Activated T-helper 1 cell treated with anti-CD3 and anti-CD28 coated beads, Interleukin-12 subunit alpha, Interleukin-12 subunit beta, Interleukin-2, Interleukin-4 antibody, amounts not matched to agents 30 ng/mL and 10 ng/mL and 1 ng/mL, durations not matched to agents 14 hours and 24 hours and 36 hours (primary cell): ENCODE measurements at regions of chr7 and their contacts with region 1.

Region 1: GRCh38 chr7:140924019-140924820 is 509 bp downstream of the BRAF start:
- DNase-seq: peak; percentile 69
- H3K4me3 Mint-ChIP-seq: no peak overlapping the region
- H3K27ac Mint-ChIP-seq: no peak overlapping the region
- H3K4me1 Mint-ChIP-seq: peaks cover 11% of the 10 kb centered on the region
- H3K27me3 Mint-ChIP-seq: no peaks in the 10 kb centered on the region

Region 2: DNA sequence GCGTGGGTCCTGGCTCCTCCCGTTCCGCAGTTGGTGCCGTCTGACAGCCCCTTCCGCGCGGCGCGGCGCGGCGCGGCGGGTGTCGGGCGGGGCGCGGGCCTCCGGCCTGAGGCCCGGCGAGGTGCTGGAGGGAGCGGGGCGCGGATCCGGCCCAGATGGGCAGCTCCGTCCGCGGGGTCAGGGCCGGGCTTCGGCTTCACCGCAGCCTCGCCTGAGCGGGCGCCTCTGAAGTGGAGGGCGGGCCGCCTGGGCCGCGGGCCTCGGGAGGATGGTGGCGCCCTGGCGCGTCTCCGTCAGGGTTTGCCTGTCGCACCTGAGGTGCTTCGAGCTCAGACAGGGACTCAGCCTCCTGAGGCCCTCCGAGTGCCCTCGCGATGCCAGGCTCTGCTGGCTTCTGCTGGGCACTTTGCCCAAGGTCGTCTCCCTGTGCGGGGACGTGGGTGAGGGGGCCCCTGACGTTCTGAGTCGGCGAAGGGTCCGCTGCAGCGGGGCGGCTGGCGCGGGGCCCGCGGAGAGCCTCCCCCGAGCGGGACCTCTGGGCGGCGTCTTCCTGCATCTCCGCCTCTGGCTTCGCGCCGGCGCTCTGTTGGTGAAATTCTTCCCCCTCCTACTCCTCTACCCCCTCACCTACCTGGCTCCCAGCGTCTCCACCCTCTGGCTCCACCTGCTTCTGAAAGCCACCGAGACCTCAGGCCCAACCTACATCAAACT is 251.0 kb before region 1 on chr7:
- intact Hi-C with region 1: loop called (anchors 1 kb)
- DNase-seq: peak; percentile 56
- H3K4me3 Mint-ChIP-seq: peak overlapping the region; percentile 88
- H3K27ac Mint-ChIP-seq: peak overlapping the region; percentile 89
- H3K4me1 Mint-ChIP-seq: peaks cover 27% of the 10 kb centered on the region
- H3K27me3 Mint-ChIP-seq: peaks cover 2% of the 10 kb centered on the region

Region 3: GRCh38 chr7:140810830-140811556 is 113.2 kb before region 1 on chr7:
- intact Hi-C with region 1: loop called (anchors 1 kb)
- DNase-seq: peak; percentile 53
- H3K4me3 Mint-ChIP-seq: no peak overlapping the region
- H3K27ac Mint-ChIP-seq: no peak overlapping the region
- H3K4me1 Mint-ChIP-seq: no peaks in the 10 kb centered on the region
- H3K27me3 Mint-ChIP-seq: peaks cover 2% of the 10 kb centered on the region

Region 4: GRCh38 chr7:140902303-140902953 is 21.8 kb before region 1 on chr7:
- intact Hi-C with region 1: loop called (anchors 1 kb)
- DNase-seq: no peak
- H3K4me3 Mint-ChIP-seq: peak overlapping the region; percentile 9
- H3K27ac Mint-ChIP-seq: peak overlapping the region; percentile 78
- H3K4me1 Mint-ChIP-seq: peaks cover 40% of the 10 kb centered on the region
- H3K27me3 Mint-ChIP-seq: no peaks in the 10 kb centered on the region

Region 5: GRCh38 chr7:141551094-141551781 is 627.0 kb after region 1 on chr7 and contains the start of gene AGK:
- intact Hi-C with region 1: loop called (anchors 5 kb)
- DNase-seq: peak; percentile 79
- H3K4me3 Mint-ChIP-seq: peak within 1 kb of the TSS; percentile 91
- H3K27ac Mint-ChIP-seq: peak within 1 kb of the TSS; percentile 97
- H3K4me1 Mint-ChIP-seq: peaks cover 50% of the 10 kb centered on the region
- H3K27me3 Mint-ChIP-seq: no peaks in the 10 kb centered on the region
- total RNA-seq, gene AGK: 174 and 179 TPM in 2 replicates